ENCODE measurements at regions of chr20 and their contacts with region 1.

Region 1: DNA sequence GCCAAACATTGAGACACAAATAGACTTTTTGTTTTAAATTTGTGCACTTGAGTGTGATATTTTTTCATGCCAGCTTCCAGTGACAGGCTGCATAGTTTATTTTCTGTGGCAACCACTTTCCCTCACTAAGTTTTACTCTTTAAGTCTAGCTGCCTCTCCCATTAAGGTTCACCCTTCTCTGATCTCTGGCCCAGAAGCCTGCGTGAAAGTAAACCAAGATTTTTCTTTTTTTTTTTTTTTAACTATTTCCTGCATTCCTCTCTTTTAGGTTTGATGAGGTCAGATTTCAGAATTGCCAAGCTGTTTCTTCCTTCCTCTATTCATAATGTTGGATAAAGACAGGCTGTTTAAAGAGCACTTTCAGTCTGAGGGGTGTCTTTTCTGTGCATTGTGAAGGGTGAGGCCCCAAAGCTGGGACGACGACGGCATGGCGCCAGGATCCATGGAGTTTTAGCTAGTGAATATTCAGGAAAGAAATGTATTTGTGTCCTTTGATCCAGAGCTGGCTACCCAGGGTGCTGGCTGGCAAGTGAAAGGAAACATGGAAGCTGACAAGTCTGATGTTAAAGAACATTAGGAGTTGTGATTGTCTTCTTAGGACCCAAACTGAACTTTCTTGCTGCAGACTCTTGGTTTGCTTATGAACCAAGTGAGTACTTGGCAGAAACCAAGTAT is 50.7 kb downstream of the DOK5 start:
- DNase-seq: peak; percentile 39
- H3K4me3 ChIP-seq: no peak overlapping the region
- H3K27ac ChIP-seq: no peak overlapping the region
- H3K4me1 ChIP-seq: peaks cover 4% of the 10 kb centered on the region
- H3K27me3 ChIP-seq: no peaks in the 10 kb centered on the region
- CTCF ChIP-seq: no peak
- POLR2A ChIP-seq: no peak

Region 2: GRCh38 chr20:53734006-53734688 is 791.9 kb before region 1 on chr20:
- CTCF ChIA-PET with region 1: no interaction called
- POLR2A ChIA-PET with region 1: no interaction called
- dilution Hi-C with region 1: no loop called
- intact Hi-C with region 1: no loop called
- DNase-seq: no peak
- H3K4me3 ChIP-seq: no peak overlapping the region
- H3K27ac ChIP-seq: no peak overlapping the region
- H3K4me1 ChIP-seq: peaks cover 11% of the 10 kb centered on the region
- H3K27me3 ChIP-seq: peaks cover 0 to 5% of the 10 kb centered on the region in 2 experiments
- CTCF ChIP-seq: no peak
- POLR2A ChIP-seq: no peak

Region 3: DNA sequence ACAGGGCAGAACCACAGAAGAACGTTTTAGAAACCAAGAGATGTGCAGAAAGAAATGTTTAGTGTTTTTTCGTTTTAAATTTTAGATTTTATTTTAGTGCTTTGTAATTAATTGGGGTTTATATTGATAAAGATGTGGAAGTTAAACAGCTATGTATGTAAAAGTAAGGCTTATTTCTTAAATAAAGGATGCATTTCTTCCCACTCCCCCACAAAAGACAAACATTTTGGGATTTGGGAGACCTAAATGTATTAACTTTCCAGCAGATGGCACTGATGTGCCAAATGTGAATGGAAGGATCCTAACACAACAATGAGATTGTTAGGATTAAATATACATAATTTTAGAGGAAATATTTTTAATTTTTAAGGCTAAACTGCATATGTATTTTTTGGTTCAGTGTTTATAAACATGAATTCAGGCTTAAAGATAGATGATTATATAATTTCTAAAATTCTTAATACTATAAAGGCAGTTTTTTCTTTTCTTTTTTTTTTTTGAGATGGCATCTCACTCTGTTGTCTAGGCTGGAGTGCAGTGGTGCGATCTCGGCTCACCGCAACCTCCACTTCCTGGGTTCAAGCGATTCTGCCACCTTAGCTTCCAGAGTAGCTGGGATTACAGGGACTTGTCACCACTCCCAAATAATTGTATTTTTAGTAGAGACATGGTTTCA is 306.2 kb before region 1 on chr20:
- CTCF ChIA-PET with region 1: interaction called, 5 read pairs
- POLR2A ChIA-PET with region 1: no interaction called
- dilution Hi-C with region 1: no loop called
- intact Hi-C with region 1: loop called (anchors 2 kb)
- DNase-seq: peak; percentile 56
- H3K4me3 ChIP-seq: no peak overlapping the region
- H3K27ac ChIP-seq: no peak overlapping the region
- H3K4me1 ChIP-seq: peaks cover 11% of the 10 kb centered on the region
- H3K27me3 ChIP-seq: no peaks in the 10 kb centered on the region
- CTCF ChIP-seq: peak; percentile 30 to 33
- POLR2A ChIP-seq: no peak

Region 4: DNA sequence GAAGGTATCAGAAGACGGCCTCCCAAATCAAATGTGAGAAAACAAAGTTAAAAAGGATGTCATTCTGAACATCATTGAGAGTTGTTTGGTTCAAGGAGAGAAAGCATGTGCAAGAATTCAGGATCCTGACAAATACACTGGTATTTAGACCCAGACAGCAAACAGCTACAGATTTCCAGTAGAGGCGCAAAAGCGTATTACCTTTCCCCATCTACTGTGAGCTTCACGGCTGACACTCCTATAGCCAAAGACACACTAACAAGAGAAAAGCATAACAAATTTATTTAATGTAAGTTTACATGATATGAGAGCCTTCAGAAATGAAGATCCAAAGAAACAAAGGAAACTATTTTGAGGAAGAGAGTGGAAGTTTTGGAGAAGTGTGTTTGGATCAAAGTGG is 76.9 kb before region 1 on chr20:
- CTCF ChIA-PET with region 1: no interaction called
- POLR2A ChIA-PET with region 1: no interaction called
- dilution Hi-C with region 1: no loop called
- intact Hi-C with region 1: no loop called
- DNase-seq: no peak
- H3K4me3 ChIP-seq: no peak overlapping the region
- H3K27ac ChIP-seq: no peak overlapping the region
- H3K4me1 ChIP-seq: no peaks in the 10 kb centered on the region
- H3K27me3 ChIP-seq: peaks cover 0 to 2% of the 10 kb centered on the region in 2 experiments
- CTCF ChIP-seq: no peak
- POLR2A ChIP-seq: no peak

Region 5: DNA sequence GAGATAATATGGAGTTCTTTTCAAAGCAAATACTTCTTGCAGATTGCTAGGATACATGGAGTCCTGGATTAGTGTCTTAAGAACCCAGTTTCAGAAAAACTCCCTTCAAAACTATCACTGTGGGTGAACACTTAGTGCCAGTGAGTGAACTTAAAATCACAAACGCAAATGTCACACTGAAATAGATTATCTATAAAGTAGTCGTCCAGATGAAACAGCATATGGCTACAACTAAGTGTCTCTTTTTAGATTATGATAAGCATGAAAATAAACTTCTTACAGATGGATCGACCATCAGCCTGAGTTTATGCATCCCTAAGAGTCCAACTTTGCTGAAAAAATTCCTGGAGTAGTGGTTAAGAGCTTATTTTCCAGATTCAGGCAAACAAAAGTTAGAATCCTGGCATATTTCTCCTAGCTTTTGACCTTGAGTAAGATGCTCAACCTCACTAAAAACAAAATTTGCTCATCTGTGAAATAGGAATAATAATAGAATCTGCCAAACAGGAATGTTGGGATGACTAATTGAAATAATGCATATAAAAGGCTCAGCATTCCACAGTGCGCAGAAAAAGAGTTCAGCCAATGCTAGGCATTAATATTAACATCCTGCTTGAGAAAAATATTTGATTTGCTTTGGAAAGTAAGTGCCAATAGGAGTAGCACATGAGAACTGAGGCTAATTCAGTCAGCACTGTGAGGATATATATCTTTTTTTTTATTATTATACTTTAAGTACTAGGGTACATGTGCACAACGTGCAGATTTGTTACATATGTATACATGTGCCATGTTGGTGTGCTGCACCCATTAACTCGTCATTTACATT is 19.9 kb after region 1 on chr20:
- CTCF ChIA-PET with region 1: no interaction called
- POLR2A ChIA-PET with region 1: no interaction called
- dilution Hi-C with region 1: no loop called
- intact Hi-C with region 1: no loop called
- DNase-seq: no peak
- H3K4me3 ChIP-seq: no peak overlapping the region
- H3K27ac ChIP-seq: no peak overlapping the region
- H3K4me1 ChIP-seq: no peaks in the 10 kb centered on the region
- H3K27me3 ChIP-seq: no peaks in the 10 kb centered on the region
- CTCF ChIP-seq: no peak
- POLR2A ChIP-seq: no peak

Region 6: GRCh38 chr20:54557806-54558590 is 31.9 kb after region 1 on chr20:
- CTCF ChIA-PET with region 1: interaction called, 3 read pairs
- POLR2A ChIA-PET with region 1: no interaction called
- dilution Hi-C with region 1: no loop called
- intact Hi-C with region 1: loop called (anchors 2 kb)
- DNase-seq: peak; percentile 47
- H3K4me3 ChIP-seq: peak overlapping the region in 1 of 3 experiments; percentile 36
- H3K27ac ChIP-seq: peak overlapping the region; percentile 59
- H3K4me1 ChIP-seq: peaks cover 37% of the 10 kb centered on the region
- H3K27me3 ChIP-seq: no peaks in the 10 kb centered on the region
- CTCF ChIP-seq: no peak
- POLR2A ChIP-seq: no peak

Region 7: GRCh38 chr20:55172310-55172995 is 646.4 kb after region 1 on chr20:
- CTCF ChIA-PET with region 1: no interaction called
- POLR2A ChIA-PET with region 1: no interaction called
- dilution Hi-C with region 1: no loop called
- intact Hi-C with region 1: no loop called
- DNase-seq: no peak
- H3K4me3 ChIP-seq: no peak overlapping the region
- H3K27ac ChIP-seq: no peak overlapping the region
- H3K4me1 ChIP-seq: no peaks in the 10 kb centered on the region
- H3K27me3 ChIP-seq: no peaks in the 10 kb centered on the region
- CTCF ChIP-seq: no peak
- POLR2A ChIP-seq: no peak